ENCODE measurements at regions of chr12 and their contacts with region 1.

Region 1: DNA sequence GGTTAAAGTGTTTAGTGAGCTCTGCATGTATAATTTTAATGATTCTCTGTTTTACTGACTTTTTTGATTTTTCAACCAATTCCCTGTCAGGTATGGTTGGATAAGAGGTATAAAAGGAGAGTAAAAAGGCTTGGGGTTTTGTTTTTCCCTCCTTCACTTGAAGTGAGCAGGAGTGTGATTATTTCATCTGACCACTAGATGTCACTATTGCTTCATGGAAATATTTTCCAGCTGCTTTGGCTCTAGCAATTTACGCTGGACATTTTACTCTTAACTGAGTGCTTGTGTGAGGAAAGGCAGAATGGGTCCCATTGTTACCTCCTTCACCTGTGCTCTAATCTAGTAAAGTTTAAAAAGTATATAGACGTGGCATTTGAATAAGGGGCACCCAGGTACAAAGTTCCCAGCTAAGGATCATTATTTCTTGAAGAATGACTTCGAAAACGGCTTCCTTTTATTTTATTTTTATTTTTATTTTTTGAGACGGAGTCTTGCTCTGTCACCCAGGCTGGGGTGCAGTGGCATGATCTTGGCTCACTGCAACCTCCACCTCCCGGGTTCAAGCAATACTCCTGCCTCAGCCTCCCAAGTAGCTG is 66.5 kb downstream of the TBC1D30 start:
- DNase-seq: no peak
- ATAC-seq: peak; percentile 60
- H3K4me3 ChIP-seq: no peak overlapping the region
- H3K27ac ChIP-seq: no peak overlapping the region
- H3K4me1 ChIP-seq: peaks cover 26% of the 10 kb centered on the region
- H3K27me3 ChIP-seq: no peaks in the 10 kb centered on the region
- CTCF ChIP-seq: peak; percentile 48 to 69 (median 59); a peak in 5 of 6 replicates
- EP300 ChIP-seq: no peak
- POLR2A ChIP-seq: no peak
- RAD21 ChIP-seq: peak; percentile 95

Region 2: DNA sequence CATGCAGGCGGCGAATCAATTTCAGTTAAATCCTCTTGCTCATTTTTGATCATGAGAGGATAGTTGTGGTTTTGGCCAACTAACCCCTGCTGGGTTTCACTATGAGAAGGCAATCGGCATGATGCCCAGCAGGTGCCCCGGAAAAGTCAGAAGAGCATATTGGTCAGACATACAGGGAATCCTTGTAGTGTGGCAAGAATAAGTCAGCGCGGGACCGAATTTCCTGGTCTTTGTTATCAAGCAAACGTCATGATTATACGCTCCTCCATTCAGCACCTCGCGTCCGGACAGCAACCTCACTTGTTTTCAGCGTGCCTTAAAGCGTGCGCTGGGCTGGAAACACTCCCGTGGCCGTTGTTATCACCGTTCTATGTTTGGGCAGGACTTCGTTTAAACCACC is 64.7 kb before region 1 on chr12:
- CTCF ChIA-PET with region 1: interaction called, 4 read pairs
- POLR2A ChIA-PET with region 1: no interaction called
- RAD21 ChIA-PET with region 1: interaction called, 11 read pairs
- SMC1A ChIA-PET with region 1: interaction called, 6 read pairs
- in situ Hi-C with region 1: no loop called
- intact Hi-C with region 1: no loop called
- DNase-seq: peak; percentile 66
- ATAC-seq: peak; percentile 57
- H3K4me3 ChIP-seq: peak overlapping the region; percentile 94
- H3K27ac ChIP-seq: no peak overlapping the region
- H3K4me1 ChIP-seq: no peaks in the 10 kb centered on the region
- H3K27me3 ChIP-seq: peaks cover 0 to 2% of the 10 kb centered on the region in 2 experiments; a peak in 2 of 4 replicates
- CTCF ChIP-seq: no peak
- EP300 ChIP-seq: no peak; a peak in 1 of 4 replicates
- POLR2A ChIP-seq: no peak
- RAD21 ChIP-seq: no peak

Region 3: GRCh38 chr12:64903479-64904152 is 12.6 kb after region 1 on chr12:
- CTCF ChIA-PET with region 1: interaction called, 21 read pairs
- POLR2A ChIA-PET with region 1: no interaction called
- RAD21 ChIA-PET with region 1: interaction called, 6 read pairs
- SMC1A ChIA-PET with region 1: interaction called, 23 read pairs
- in situ Hi-C with region 1: no loop called
- intact Hi-C with region 1: no loop called
- DNase-seq: no peak
- ATAC-seq: no peak
- H3K4me3 ChIP-seq: no peak overlapping the region
- H3K27ac ChIP-seq: no peak overlapping the region
- H3K4me1 ChIP-seq: no peaks in the 10 kb centered on the region
- H3K27me3 ChIP-seq: no peaks in the 10 kb centered on the region
- CTCF ChIP-seq: no peak
- EP300 ChIP-seq: no peak
- POLR2A ChIP-seq: no peak
- RAD21 ChIP-seq: no peak

Region 4: GRCh38 chr12:65100140-65100539 is 209.2 kb after region 1 on chr12:
- CTCF ChIA-PET with region 1: interaction called, 91 read pairs
- POLR2A ChIA-PET with region 1: interaction called, 3 read pairs
- RAD21 ChIA-PET with region 1: interaction called, 32 read pairs
- SMC1A ChIA-PET with region 1: interaction called, 110 read pairs
- in situ Hi-C with region 1: no loop called
- intact Hi-C with region 1: no loop called
- DNase-seq: no peak
- ATAC-seq: no peak
- H3K4me3 ChIP-seq: no peak overlapping the region
- H3K27ac ChIP-seq: no peak overlapping the region
- H3K4me1 ChIP-seq: no peaks in the 10 kb centered on the region
- H3K27me3 ChIP-seq: no peaks in the 10 kb centered on the region; a peak in 1 of 4 replicates
- CTCF ChIP-seq: peak in 2 of 3 experiments; percentile 8 to 18; a peak in 1 of 6 replicates
- EP300 ChIP-seq: no peak
- POLR2A ChIP-seq: no peak
- RAD21 ChIP-seq: peak; percentile 56

Region 5: DNA sequence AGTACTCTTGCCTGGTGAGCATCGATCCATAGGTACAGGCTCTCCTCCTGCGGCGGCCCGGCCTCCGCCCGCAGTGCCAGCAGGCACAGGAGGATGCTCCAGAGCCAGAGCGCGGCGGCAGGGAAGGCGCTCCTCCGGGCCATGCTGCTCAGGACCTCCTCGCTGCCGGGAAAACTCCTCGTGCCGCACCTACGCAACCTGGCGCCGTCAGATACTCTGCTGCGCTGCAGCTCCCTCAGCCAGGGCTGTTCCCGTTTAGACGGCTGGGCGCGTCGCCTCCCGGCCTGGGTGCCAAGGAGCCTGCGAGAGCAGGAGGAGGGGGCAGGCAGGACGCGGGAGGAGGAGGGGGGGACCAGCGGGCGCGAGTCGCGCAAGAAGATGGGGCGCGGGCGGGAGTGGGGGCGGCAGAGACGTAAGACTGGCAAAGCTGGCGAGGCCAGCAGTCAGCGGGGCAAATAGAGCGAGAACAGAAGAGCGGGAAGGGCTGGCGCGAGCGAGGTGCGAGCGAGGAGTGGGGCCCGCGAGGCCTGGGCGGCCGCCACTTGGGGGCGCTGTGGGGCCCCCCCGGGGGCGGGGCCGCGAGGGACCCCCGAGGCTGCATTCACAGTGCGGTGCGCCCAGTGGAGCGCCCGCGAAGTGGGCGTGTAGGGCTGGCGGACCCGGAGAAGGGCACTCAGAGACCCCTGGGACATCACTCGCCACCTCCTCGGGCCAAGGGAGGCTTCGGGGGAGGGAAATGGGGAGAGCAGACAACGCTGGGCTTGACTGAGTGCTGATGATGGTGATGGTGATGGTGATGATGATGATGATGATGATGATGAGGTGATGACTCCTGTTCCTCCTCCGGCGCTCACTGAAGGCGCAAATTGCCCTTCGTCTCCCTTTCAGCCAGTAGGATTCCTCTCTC is 230.3 kb after region 1 on chr12 and contains the start of gene WIF1:
- CTCF ChIA-PET with region 1: interaction called, 23 read pairs
- POLR2A ChIA-PET with region 1: interaction called, 3 read pairs
- RAD21 ChIA-PET with region 1: interaction called, 13 read pairs
- SMC1A ChIA-PET with region 1: interaction called, 22 read pairs
- in situ Hi-C with region 1: loop called (anchors 5 kb)
- intact Hi-C with region 1: loop called (anchors 2 kb)
- DNase-seq: no peak
- ATAC-seq: peak; percentile 87
- H3K4me3 ChIP-seq: peak within 1 kb of the TSS; percentile 60; the same call in 1 of the 2 replicates
- H3K27ac ChIP-seq: no peak within 1 kb of the TSS
- H3K4me1 ChIP-seq: no peaks in the 10 kb centered on the region; the same call in 1 of the 2 replicates
- H3K27me3 ChIP-seq: peaks cover 2 to 5% of the 10 kb centered on the region in 2 experiments; a peak in 3 of 4 replicates
- CTCF ChIP-seq: peak; percentile 31 to 45 (median 41); a peak in 5 of 6 replicates
- EP300 ChIP-seq: no peak
- POLR2A ChIP-seq: no peak
- RAD21 ChIP-seq: 0 out of 2 replicates have a peak, but pooled peaks have one; percentile 12
- polyA plus RNA-seq, gene WIF1: 0.05 TPM in 1 of 2 experiments, not detected in the other

Region 6: DNA sequence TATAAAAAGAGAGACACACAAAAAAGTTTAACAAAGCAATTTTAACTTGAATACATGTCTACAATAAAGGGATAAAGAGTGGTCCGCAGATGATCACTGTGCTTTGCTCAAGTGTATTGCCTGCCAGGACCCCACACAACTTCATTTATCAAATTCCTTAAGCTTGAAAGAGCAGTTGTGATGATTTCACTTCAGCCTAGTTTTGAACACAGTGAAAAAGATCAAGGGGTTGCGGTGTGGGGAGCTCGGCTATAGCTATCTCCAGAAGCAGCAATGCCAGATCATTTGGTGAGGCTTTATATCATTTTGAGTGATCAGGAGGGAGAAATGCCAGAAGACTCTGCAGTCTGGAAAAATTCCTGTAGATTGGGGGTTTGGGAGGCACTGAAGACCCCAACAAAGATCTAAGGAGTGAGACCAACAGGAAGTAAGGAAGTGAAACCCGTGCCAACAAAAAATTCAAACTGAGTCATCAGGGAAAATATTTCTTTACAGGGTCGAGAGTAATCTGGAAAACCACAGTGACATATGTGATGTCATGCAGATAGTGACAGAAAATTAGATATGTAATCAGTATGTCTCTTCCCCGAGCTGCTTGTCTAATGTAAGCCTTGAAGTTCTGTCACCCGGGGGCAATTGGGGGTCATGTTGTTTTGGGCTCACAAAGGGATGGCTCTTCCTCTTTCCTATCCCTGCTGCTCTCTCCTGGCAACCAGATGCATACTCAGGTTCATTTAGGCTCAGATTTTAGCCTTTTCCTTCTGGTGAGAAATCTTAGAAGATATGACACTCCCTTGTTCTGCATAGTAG is 609.3 kb after region 1 on chr12:
- CTCF ChIA-PET with region 1: no interaction called
- POLR2A ChIA-PET with region 1: no interaction called
- RAD21 ChIA-PET with region 1: no interaction called
- SMC1A ChIA-PET with region 1: no interaction called
- in situ Hi-C with region 1: no loop called
- intact Hi-C with region 1: no loop called
- DNase-seq: no peak
- ATAC-seq: no peak
- H3K4me3 ChIP-seq: no peak overlapping the region
- H3K27ac ChIP-seq: no peak overlapping the region
- H3K4me1 ChIP-seq: no peaks in the 10 kb centered on the region
- H3K27me3 ChIP-seq: peaks cover 0 to 3% of the 10 kb centered on the region in 2 experiments; a peak in 2 of 4 replicates
- CTCF ChIP-seq: no peak
- EP300 ChIP-seq: no peak
- POLR2A ChIP-seq: no peak
- RAD21 ChIP-seq: no peak

Region 7: GRCh38 chr12:66107451-66107915 is 1216.5 kb after region 1 on chr12:
- CTCF ChIA-PET with region 1: no interaction called
- POLR2A ChIA-PET with region 1: no interaction called
- RAD21 ChIA-PET with region 1: no interaction called
- SMC1A ChIA-PET with region 1: no interaction called
- in situ Hi-C with region 1: loop called (anchors 10 kb)
- intact Hi-C with region 1: no loop called
- DNase-seq: peak; percentile 56
- ATAC-seq: peak; percentile 97
- H3K4me3 ChIP-seq: no peak overlapping the region
- H3K27ac ChIP-seq: no peak overlapping the region
- H3K4me1 ChIP-seq: no peaks in the 10 kb centered on the region
- H3K27me3 ChIP-seq: no peaks in the 10 kb centered on the region
- CTCF ChIP-seq: peak; percentile 67 to 83 (median 75)
- EP300 ChIP-seq: no peak
- POLR2A ChIP-seq: no peak
- RAD21 ChIP-seq: peak; percentile 90